ENCODE measurements at regions of chr2 and their contacts with region 1.

Region 1: DNA sequence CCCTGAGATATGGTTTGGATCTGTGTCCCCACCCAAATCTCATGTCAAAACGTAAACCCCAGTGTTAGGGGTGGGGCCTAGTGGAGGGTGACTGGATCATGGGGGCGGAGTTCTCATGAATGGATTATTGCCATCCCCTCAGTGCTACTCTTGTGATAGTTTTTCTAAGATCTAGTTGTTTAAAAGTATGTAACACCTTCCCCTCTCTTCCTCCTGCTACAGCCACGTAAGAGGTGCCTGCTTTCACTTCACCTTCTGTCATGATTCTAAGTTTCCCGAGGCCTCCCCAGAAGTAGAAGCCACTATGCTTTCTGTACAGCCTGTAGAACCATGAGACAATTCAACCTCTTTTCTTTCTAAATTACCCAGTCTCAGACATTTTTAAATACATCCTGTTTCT is 16.9 kb downstream of the PUM2 start:
- DNase-seq: no peak
- ATAC-seq: no peak

Region 2: DNA sequence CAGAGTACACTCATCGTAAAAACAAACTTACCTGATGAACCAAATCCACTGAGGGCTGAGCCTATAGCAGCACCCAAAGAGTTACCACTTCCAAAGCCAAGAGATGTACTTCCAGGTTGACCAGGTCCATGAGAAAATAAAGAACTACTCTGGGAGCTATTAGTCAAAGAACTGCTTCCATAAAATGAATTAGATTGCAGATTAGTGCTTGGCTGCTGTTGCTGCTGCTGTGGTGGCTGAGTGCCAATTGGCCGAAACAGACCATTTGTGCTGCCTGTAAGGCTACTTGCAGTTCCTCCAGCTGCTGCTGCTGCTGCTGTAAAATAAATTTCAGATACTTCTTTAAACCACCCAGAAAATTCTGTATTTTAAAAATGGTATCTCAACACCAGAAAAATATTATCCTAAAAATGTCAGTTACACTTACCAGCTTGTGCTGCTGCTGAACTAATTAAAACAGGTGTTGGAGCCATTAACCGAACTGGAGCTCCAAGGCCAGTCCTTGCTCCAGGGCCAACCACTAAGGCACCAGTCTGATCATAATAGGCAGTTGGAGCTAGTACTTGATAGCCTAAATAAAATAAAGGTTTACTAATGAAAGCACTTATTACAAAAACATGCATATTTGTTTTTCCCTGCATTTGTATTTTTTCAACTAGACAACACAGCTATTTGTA is 50.7 kb before region 1 on chr2:
- intact Hi-C with region 1: loop called (anchors 5 kb)
- DNase-seq: peak; percentile 82
- ATAC-seq: peak; percentile 89